ENCODE measurements at regions of chr12 and their contacts with region 1.

Region 1: DNA sequence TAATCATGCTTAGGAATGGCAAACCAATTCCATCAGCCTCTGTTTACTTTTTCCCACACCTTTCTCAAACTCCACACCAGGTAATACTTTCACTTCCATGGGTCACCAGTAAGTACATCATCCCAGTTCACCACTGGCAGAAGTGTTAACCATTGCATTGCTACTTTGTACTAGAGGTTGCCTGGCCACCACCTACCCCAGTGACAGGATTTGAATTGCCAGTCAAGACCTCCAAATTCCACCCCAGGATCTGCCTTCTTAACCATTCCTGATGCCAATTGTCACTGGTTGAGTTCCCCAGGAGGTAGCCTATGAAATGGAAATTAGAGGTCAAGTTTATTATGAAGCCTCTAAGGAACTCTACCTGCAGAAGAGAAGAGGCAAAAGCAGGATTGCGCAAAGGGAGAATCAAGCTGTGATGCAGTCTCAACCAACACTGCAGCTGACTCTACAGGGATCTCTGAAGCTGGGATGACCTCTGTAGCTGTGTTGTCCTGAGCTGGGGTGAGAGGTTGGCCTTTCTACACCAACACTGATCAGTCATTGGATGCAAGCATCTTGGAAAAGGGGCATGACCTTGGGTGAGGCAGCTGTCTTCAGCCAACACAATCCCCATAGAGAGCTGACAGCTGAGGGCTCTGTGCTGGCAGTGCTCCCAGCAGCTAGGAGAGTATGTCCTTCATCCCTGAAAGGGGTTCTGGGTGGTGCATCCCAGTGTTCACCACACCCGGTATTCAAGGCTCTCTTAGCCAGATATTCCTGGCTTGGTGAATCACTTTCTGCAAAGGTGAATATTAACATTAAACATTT is 37.0 kb upstream of the HMGA2 start:
- DNase-seq: no peak
- H3K4me3 ChIP-seq: no peak overlapping the region
- H3K4me3 Mint-ChIP-seq: no peak overlapping the region
- H3K27ac Mint-ChIP-seq: no peak overlapping the region
- H3K4me1 ChIP-seq: no peaks in the 10 kb centered on the region
- H3K4me1 Mint-ChIP-seq: no peaks in the 10 kb centered on the region
- H3K27me3 ChIP-seq: no peaks in the 10 kb centered on the region; the same call in 1 of the 2 replicates
- H3K27me3 Mint-ChIP-seq: no peaks in the 10 kb centered on the region
- CTCF ChIP-seq: no peak

Region 2: DNA sequence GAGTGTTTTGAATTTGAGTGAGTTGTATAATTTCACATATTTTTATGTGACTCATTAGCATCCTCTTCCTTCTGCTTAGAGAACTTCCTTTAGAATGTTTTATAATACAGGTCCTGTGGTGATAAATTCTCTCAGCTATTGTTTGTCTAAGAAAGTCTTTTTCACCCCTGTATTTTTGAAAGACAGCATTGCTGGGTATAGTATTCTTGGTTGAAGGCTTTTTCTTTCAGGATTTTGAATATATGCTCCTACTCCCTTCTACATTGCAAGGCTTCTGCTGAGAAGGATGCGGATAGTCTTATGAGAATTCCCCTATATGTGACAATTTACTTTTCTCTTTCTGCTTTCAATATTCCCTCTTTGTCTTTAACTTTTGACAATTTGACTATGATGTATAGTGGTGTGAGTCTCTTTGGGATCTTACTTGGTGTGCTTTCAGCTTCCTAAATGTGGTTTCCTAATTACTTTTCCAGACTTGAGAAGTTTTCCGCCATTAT is 81.8 kb before region 1 on chr12:
- CTCF ChIA-PET with region 1: no interaction called
- POLR2A ChIA-PET with region 1: no interaction called
- intact Hi-C with region 1: no loop called
- DNase-seq: no peak
- H3K4me3 ChIP-seq: no peak overlapping the region
- H3K4me3 Mint-ChIP-seq: no peak overlapping the region
- H3K27ac Mint-ChIP-seq: no peak overlapping the region
- H3K4me1 ChIP-seq: no peaks in the 10 kb centered on the region
- H3K4me1 Mint-ChIP-seq: no peaks in the 10 kb centered on the region
- H3K27me3 ChIP-seq: no peaks in the 10 kb centered on the region
- H3K27me3 Mint-ChIP-seq: no peaks in the 10 kb centered on the region
- CTCF ChIP-seq: no peak

Region 3: DNA sequence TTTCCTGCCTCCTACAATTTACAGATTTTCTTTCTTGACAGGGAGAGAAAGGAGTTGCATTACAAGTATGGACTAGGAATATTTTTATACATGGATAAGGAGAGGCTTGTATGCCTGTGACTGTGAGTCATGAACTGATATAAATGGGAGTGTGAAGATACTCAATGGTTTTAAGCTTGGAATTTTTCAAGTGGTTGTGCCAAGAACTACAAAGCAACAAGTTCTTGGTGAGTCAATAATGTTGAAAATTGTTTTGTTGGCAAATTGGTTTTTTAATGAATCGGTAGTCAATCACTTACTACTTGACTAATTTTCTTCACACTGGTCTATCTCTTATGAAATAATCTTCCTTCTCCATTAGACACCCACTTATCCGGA is 21.8 kb before region 1 on chr12:
- CTCF ChIA-PET with region 1: no interaction called
- POLR2A ChIA-PET with region 1: no interaction called
- intact Hi-C with region 1: loop called (anchors 1 kb)
- DNase-seq: no peak
- H3K4me3 ChIP-seq: no peak overlapping the region
- H3K4me3 Mint-ChIP-seq: no peak overlapping the region
- H3K27ac Mint-ChIP-seq: no peak overlapping the region
- H3K4me1 ChIP-seq: no peaks in the 10 kb centered on the region
- H3K4me1 Mint-ChIP-seq: no peaks in the 10 kb centered on the region
- H3K27me3 ChIP-seq: no peaks in the 10 kb centered on the region
- H3K27me3 Mint-ChIP-seq: no peaks in the 10 kb centered on the region
- CTCF ChIP-seq: no peak

Region 4: DNA sequence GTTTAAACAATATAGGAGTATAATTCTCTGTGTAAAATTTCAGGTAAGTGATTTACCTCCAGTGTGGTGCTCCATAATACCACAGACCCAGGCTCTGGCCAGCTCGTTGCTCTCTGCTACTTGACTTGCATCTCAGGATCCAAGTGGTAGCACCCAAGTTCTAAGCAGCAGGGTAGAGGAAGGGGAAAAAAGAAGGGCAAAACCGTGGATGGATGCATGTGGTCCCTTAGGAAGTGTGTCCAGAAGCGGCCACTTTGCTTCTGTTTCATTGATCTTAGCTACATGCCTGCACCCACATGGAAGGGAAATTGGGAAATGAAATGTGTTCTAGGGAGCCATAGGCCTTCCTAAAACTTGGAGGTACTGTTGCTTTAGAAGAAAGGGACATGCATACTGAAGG is 11.5 kb before region 1 on chr12:
- CTCF ChIA-PET with region 1: no interaction called
- POLR2A ChIA-PET with region 1: no interaction called
- intact Hi-C with region 1: no loop called
- DNase-seq: no peak
- H3K4me3 ChIP-seq: no peak overlapping the region
- H3K4me3 Mint-ChIP-seq: no peak overlapping the region
- H3K27ac Mint-ChIP-seq: no peak overlapping the region
- H3K4me1 ChIP-seq: peaks cover 14% of the 10 kb centered on the region
- H3K4me1 Mint-ChIP-seq: peaks cover 7% of the 10 kb centered on the region
- H3K27me3 ChIP-seq: no peaks in the 10 kb centered on the region
- H3K27me3 Mint-ChIP-seq: no peaks in the 10 kb centered on the region
- CTCF ChIP-seq: no peak